HEK293T (cell line): ENCODE measurements at regions of chrX and their contacts with region 1.

Region 1: DNA sequence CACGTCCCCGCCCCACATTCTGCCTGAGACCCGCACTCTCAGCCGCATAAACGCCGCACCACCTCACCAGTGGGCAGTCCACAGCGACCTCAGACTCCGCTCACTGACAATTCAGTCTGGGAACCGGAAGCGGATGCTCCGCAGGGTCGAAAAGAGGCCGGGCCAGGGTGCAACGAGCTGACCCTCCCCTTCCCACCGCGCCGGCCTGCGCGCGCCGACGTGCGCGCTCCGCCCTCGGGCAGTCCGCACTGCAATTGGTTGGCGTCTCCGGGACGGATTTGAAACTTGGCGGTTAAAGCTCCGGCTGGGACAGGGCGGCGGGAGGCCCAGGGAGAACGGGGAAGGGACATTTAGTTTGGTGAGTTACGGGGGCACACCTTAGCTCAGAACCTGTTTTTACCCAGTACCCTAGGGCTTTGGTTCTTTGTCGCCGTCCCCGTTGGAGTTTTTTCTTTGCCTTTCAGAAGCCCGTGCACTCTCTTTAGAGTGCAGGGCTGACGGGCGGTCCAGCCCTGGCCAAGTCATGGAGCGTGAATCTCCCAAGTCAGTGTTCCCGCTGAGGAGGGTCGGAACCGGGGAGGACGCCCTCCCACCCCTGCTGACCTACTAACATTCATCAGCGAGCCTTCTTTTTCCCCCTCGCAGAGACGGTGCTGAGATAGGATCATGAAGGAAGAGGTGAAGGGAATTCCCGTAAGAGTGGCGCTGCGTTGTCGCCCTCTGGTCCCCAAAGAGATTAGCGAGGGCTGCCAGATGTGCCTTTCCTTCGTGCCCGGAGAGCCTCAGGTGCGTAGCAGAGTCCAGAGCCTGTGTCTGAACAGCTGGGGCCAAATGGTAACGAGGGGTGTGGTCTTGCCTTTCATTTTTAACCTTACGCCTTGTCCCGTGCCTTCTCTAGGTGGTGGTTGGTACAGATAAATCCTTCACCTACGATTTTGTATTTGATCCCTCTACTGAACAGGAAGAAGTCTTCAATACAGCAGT is at the starts of genes KIF4A and PDZD11:
- DNase-seq: peak; percentile 90

Region 2: DNA sequence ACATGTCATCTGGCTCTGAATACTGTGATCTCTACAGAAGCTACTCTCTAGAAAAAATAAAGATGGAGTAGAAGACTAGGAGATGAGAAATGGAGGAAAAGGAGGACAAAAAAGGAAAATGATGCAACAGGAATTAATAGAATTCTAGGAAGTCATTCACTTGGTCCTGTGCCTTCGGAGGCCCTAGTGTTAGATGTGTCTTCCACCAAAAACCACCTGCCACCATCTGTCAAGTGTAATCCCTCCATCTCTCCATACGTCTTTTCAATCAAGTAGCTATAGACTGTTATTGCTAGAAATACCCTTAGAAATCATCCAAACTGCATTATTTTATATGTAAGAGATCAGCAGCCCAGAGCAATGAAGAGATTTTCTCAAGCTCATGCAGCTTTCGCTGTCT is 11.0 kb before region 1 on chrX:
- CTCF ChIA-PET with region 1: no interaction called
- POLR2A ChIA-PET with region 1: interaction called, 17 read pairs
- DNase-seq: no peak